ENCODE measurements at regions of chr4 and their contacts with region 1.

Region 1: GRCh38 chr4:57102050-57102624 is 8.0 kb downstream of the IGFBP7 start:
- DNase-seq: peak; percentile 45 to 92
- ATAC-seq: peak; percentile 83 to 92 (median 90)
- H3K4me3 ChIP-seq: peak overlapping the region in 3 of 10 donors; percentile 2 to 16 (median 10)
- H3K27ac ChIP-seq: peak overlapping the region; percentile 52 to 100 (median 90)
- H3K4me1 ChIP-seq: peaks cover 26 to 100% (median 98%) of the 10 kb centered on the region in 9 donors
- H3K27me3 ChIP-seq: no peaks in the 10 kb centered on the region
- CTCF ChIP-seq: no peak

Region 2: GRCh38 chr4:56704089-56704871 is 397.9 kb before region 1 on chr4:
- intact Hi-C with region 1: no loop called
- DNase-seq: no peak
- ATAC-seq: no peak
- H3K4me3 ChIP-seq: no peak overlapping the region
- H3K27ac ChIP-seq: peak overlapping the region in 1 of 10 donors; percentile 60
- H3K4me1 ChIP-seq: peaks cover 0 to 27% (median 0%) of the 10 kb centered on the region in 9 donors
- H3K27me3 ChIP-seq: no peaks in the 10 kb centered on the region
- CTCF ChIP-seq: no peak

Region 3: GRCh38 chr4:57043347-57044251 is 58.5 kb before region 1 on chr4:
- intact Hi-C with region 1: loop called in 5 of 10 experiments (anchors 2 to 5 kb)
- DNase-seq: peak in 1 of 2 donors; percentile 75
- ATAC-seq: peak; percentile 58 to 84 (median 73)
- H3K4me3 ChIP-seq: peak overlapping the region in 3 of 10 donors; percentile 5 to 10 (median 5)
- H3K27ac ChIP-seq: peak overlapping the region; percentile 48 to 93 (median 84)
- H3K4me1 ChIP-seq: peaks cover 18 to 100% (median 63%) of the 10 kb centered on the region in 9 donors
- H3K27me3 ChIP-seq: no peaks in the 10 kb centered on the region
- CTCF ChIP-seq: no peak

Region 4: DNA sequence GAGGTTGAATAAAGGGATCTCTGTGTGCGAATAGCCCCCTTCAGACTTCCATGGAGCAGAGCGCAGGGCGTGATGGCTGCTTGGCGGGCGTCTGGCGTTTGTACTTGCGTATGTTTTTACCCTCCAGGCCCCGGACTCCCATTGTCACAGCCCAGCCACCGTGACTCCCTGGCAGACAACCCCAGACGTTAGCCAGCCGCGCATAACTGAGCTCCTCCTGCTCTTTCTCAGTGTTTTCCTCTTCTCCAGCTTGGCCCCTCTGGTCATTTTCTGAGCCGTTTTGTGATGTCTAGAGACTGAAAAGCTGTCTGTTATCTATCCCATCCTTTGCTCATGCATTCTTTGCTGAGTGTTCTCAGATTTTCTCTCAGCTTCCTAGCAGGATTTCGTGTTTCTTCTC is 46.3 kb before region 1 on chr4:
- intact Hi-C with region 1: loop called in 2 of 10 experiments (anchors 5 kb)
- DNase-seq: peak in 1 of 2 donors; percentile 54
- ATAC-seq: peak; percentile 52 to 68 (median 64)
- H3K4me3 ChIP-seq: peak overlapping the region in 4 of 10 donors; percentile 2 to 24 (median 11)
- H3K27ac ChIP-seq: peak overlapping the region; percentile 6 to 93 (median 70)
- H3K4me1 ChIP-seq: peaks cover 15 to 91% (median 76%) of the 10 kb centered on the region in 9 donors
- H3K27me3 ChIP-seq: no peaks in the 10 kb centered on the region
- CTCF ChIP-seq: no peak